ENCODE measurements at regions of chr1 and their contacts with region 1.

Region 1: DNA sequence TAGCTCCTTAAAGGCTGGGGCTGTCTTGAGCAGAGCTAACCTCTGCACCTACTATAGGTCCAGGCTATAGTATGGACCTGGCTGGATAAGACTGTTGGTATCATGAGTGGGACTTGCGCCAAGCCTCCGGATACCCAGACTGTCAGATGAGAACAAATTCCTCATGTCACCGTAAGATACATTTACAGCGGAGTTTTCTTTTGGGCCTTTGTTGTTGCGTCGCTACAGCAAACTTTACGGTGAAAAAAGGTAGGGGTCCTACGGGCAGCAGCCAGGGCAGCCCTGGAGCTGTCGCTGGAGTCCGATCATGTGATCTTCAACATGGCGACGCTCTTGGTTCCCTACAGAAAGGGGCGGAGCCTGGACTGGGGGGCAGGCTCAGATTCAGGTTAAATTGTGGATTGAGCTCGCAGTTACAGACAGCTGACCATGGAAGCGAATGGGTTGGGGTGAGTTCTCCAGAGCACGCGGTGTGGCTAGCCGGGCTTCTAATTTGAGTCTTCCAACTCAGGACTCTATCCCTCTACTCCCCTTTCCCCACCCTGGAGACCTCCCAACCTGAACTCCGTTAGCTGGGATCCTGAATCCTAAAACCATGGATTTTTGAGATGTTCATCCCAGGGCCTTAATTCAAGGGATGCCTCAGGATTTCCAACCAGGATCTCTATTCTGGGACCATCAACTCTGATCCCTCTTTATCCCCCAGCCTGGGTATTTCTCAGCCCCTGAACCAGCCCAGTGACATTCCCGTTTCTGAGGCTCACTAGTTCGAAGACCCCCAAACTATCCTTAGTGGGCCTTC is at the start of gene UROD:
- DNase-seq: peak; percentile 88 to 94
- ATAC-seq: peak; percentile 89 to 97 (median 95)
- H3K4me3 ChIP-seq: peak within 1 kb of the TSS; percentile 75 to 100 (median 96)
- H3K27ac ChIP-seq: peak within 1 kb of the TSS in 9 of 10 donors; percentile 59 to 88 (median 82)
- H3K4me1 ChIP-seq: peaks cover 20 to 51% (median 35%) of the 10 kb centered on the region in 9 donors
- H3K27me3 ChIP-seq: no peaks in the 10 kb centered on the region
- CTCF ChIP-seq: no peak
- total RNA-seq, gene UROD: 68.1 to 94.0 (median 83.1) TPM

Region 2: GRCh38 chr1:44792783-44793714 is 219.0 kb before region 1 on chr1:
- intact Hi-C with region 1: loop called in 5 of 10 experiments (anchors 5 to 10 kb)
- DNase-seq: no peak
- ATAC-seq: peak in 3 of 8 donors; percentile 9 to 21 (median 14)
- H3K4me3 ChIP-seq: no peak overlapping the region
- H3K27ac ChIP-seq: no peak overlapping the region
- H3K4me1 ChIP-seq: no peaks in the 10 kb centered on the region
- H3K27me3 ChIP-seq: no peaks in the 10 kb centered on the region
- CTCF ChIP-seq: no peak

Region 3: GRCh38 chr1:44826375-44827196 is 185.5 kb before region 1 on chr1:
- intact Hi-C with region 1: loop called in 2 of 10 experiments (anchors 5 to 10 kb)
- DNase-seq: peak; percentile 66 to 77
- ATAC-seq: peak; percentile 65 to 93 (median 85)
- H3K4me3 ChIP-seq: peak overlapping the region in 4 of 10 donors; percentile 17 to 37 (median 25)
- H3K27ac ChIP-seq: peak overlapping the region in 9 of 10 donors; percentile 39 to 79 (median 53)
- H3K4me1 ChIP-seq: peaks cover 0 to 29% (median 10%) of the 10 kb centered on the region in 9 donors
- H3K27me3 ChIP-seq: no peaks in the 10 kb centered on the region
- CTCF ChIP-seq: no peak

Region 4: DNA sequence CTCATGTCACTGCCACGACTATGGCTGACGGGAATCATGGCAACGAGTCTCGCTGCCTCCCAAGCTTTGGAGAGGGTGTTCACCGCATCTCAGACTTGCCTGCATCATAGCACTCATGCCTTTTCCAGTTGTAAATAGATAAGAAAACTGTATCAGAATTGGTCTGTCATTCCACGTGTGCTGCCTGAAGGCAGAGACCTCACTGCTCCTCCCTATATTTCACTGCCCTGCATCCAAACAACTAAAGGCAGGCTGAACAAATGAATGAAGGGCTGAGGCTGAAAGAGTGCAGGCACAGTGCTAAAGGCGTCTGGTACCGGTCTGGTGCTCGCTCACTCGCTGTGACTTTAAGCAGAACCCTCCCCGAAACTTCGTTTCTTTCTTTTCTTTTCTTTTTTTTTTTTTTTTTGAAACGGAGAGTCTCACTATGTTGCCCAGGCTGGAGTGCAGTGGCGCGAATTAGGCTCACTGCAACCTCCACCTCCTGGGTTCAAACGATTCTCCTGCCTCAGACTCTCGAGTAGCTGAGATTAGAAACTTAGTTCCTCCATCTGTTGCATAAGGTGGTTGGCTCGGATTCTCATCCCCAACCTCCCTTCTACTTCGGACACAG is 26.2 kb before region 1 on chr1:
- intact Hi-C with region 1: loop called in 1 of 10 experiments (anchors 2 kb)
- DNase-seq: no peak
- ATAC-seq: peak in 6 of 8 donors; percentile 1 to 71 (median 8)
- H3K4me3 ChIP-seq: peak overlapping the region; percentile 55 to 89 (median 75)
- H3K27ac ChIP-seq: peak overlapping the region in 9 of 10 donors; percentile 29 to 84 (median 77)
- H3K4me1 ChIP-seq: peaks cover 2 to 27% (median 10%) of the 10 kb centered on the region in 9 donors
- H3K27me3 ChIP-seq: no peaks in the 10 kb centered on the region
- CTCF ChIP-seq: no peak

Region 5: GRCh38 chr1:45334308-45335245 is 322.5 kb after region 1 on chr1:
- intact Hi-C with region 1: no loop called
- DNase-seq: peak; percentile 45 to 51
- ATAC-seq: peak in 6 of 8 donors; percentile 49 to 75 (median 60)
- H3K4me3 ChIP-seq: no peak overlapping the region
- H3K27ac ChIP-seq: peak overlapping the region in 8 of 10 donors; percentile 23 to 66 (median 56)
- H3K4me1 ChIP-seq: peaks cover 5 to 24% (median 7%) of the 10 kb centered on the region in 9 donors
- H3K27me3 ChIP-seq: no peaks in the 10 kb centered on the region
- CTCF ChIP-seq: no peak

Region 6: GRCh38 chr1:45569962-45570581 is 558.0 kb after region 1 on chr1:
- intact Hi-C with region 1: loop called in 4 of 10 experiments (anchors 5 to 10 kb)
- DNase-seq: peak; percentile 34 to 72
- ATAC-seq: peak; percentile 74 to 88 (median 82)
- H3K4me3 ChIP-seq: no peak overlapping the region
- H3K27ac ChIP-seq: no peak overlapping the region
- H3K4me1 ChIP-seq: peaks cover 0 to 17% (median 12%) of the 10 kb centered on the region in 9 donors
- H3K27me3 ChIP-seq: no peaks in the 10 kb centered on the region
- CTCF ChIP-seq: peak; percentile 88 to 99 (median 98)